ENCODE measurements at regions of chr17 and their contacts with region 1.

Region 1: GRCh38 chr17:32877164-32877764 is 340 bp upstream of the MYO1D start:
- DNase-seq: peak; percentile 96 to 97
- H3K4me3 ChIP-seq: peak overlapping the region; percentile 74 to 97 (median 90)
- H3K27ac ChIP-seq: peak overlapping the region; percentile 91 to 100 (median 99)
- H3K4me1 ChIP-seq: peaks cover 0 to 49% (median 30%) of the 10 kb centered on the region in 4 donors
- H3K27me3 ChIP-seq: no peaks in the 10 kb centered on the region
- CTCF ChIP-seq: peak in 5 of 7 experiments; percentile 65 to 96 (median 81)
- EP300 ChIP-seq: no peak
- POLR2A ChIP-seq: no peak

Region 2: DNA sequence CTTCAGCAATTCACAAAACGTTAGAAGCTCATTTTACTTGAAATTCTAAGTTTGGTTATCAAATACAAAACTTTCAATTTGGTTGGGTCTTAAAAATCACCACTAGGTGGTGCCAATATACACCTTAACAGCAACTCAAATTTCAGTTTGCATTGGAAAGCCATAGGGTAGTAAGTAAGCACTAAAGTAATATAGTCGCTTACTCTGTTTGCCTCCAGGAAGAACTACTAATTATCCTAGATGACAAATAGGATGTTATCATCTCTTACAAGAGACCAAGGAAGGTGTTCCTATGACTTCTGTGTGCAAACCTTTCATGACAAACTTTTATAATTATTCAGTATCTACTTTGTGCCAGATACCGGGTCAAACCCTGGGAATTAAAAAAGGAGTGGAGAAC is 93.7 kb before region 1 on chr17:
- intact Hi-C with region 1: loop called (anchors 5 kb)
- DNase-seq: peak in 1 of 2 donors; percentile 80
- H3K4me3 ChIP-seq: no peak overlapping the region
- H3K27ac ChIP-seq: no peak overlapping the region
- H3K4me1 ChIP-seq: peaks cover 0 to 6% (median 0%) of the 10 kb centered on the region in 4 donors
- H3K27me3 ChIP-seq: no peaks in the 10 kb centered on the region
- CTCF ChIP-seq: peak in 5 of 7 experiments; percentile 52 to 74 (median 73)
- EP300 ChIP-seq: no peak
- POLR2A ChIP-seq: no peak

Measured in stomach (tissue), 19 donors.